Cardiac septum (tissue), 1 donor: ENCODE measurements at regions of chr14 and their contacts with region 1.

Region 1: GRCh38 chr14:50321009-50321660 is 9.0 kb downstream of the DMAC2L start:
- DNase-seq: no peak

Region 2: DNA sequence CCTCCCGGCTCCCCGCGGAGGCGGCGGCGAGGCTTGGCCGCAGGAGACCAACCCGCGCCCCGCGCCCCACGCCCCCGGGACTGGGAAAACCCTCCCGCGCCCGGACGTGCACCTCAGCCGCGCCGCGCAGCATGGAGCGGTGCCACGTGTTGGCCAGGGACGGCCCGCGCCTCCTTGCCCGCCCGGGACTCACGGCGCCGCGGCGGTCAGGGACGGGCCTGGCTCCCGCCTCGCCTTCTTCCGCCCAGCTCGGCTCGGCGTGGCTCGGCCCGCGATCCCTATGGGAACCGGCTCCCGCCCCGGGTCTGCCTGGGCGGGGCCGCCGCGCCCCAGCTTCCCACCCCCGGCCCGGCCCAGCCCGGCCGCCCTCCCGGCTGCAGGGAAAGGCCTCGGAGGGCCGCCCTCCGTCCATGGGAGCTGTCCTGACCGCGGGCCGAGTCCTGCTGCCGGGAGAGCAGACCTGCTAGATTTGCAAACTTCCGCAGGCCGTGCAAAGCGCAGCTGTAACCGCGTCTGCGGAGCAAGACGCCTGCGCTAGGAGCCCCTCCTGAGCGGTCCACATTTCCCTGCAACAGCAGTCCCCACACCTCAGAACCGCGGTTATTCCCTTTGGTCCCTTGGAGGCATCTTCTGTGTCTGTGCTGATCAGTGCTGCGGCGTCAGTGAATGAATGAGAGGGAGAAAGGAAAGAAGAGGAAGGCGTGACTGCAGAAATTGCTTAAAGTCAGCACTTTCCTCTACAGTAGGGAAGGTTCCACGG is 75.7 kb after region 1 on chr14 and contains the start of gene CDKL1:
- intact Hi-C with region 1: loop called (anchors 5 kb)
- DNase-seq: peak; percentile 86
- total RNA-seq, gene CDKL1: 3.8 TPM

Region 3: GRCh38 chr14:50532502-50533240 is 211.5 kb after region 1 on chr14 and contains the start of gene MAP4K5:
- intact Hi-C with region 1: loop called (anchors 1 kb)
- DNase-seq: peak; percentile 95
- total RNA-seq, gene MAP4K5: 19.1 TPM